ENCODE measurements at regions of chr13 and their contacts with region 1.

Region 1: GRCh38 chr13:43986421-43986981 is 106.8 kb downstream of the LACC1 start:
- DNase-seq: no peak
- H3K4me3 ChIP-seq: no peak overlapping the region
- H3K4me3 Mint-ChIP-seq: no peak overlapping the region
- H3K27ac Mint-ChIP-seq: no peak overlapping the region
- H3K4me1 ChIP-seq: no peaks in the 10 kb centered on the region
- H3K4me1 Mint-ChIP-seq: peaks cover 7% of the 10 kb centered on the region
- H3K27me3 ChIP-seq: no peaks in the 10 kb centered on the region
- H3K27me3 Mint-ChIP-seq: no peaks in the 10 kb centered on the region
- CTCF ChIP-seq: no peak

Region 2: DNA sequence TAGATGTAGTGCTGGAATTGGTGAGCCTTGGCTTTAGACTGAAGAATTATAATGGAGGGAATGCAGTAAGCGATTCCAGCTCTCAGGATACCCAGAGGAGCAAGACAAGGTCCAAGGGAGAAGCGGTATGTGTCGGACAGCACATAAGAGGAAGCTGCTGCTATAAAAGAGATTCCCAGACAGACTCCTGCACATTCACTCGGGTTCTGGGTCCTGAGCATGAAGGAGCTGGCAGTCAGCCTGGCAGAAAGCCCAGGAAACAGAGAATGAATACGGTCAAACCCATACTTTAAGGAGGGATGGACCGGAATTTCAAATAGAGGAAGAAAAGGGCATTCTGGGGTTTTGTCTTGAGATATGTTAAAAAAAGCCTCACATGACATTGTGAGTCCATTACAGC is 654.8 kb before region 1 on chr13:
- CTCF ChIA-PET with region 1: no interaction called
- POLR2A ChIA-PET with region 1: no interaction called
- intact Hi-C with region 1: no loop called
- DNase-seq: no peak
- H3K4me3 ChIP-seq: no peak overlapping the region
- H3K4me3 Mint-ChIP-seq: no peak overlapping the region
- H3K27ac Mint-ChIP-seq: no peak overlapping the region
- H3K4me1 ChIP-seq: no peaks in the 10 kb centered on the region
- H3K4me1 Mint-ChIP-seq: no peaks in the 10 kb centered on the region
- H3K27me3 ChIP-seq: no peaks in the 10 kb centered on the region
- H3K27me3 Mint-ChIP-seq: no peaks in the 10 kb centered on the region
- CTCF ChIP-seq: no peak

Region 3: DNA sequence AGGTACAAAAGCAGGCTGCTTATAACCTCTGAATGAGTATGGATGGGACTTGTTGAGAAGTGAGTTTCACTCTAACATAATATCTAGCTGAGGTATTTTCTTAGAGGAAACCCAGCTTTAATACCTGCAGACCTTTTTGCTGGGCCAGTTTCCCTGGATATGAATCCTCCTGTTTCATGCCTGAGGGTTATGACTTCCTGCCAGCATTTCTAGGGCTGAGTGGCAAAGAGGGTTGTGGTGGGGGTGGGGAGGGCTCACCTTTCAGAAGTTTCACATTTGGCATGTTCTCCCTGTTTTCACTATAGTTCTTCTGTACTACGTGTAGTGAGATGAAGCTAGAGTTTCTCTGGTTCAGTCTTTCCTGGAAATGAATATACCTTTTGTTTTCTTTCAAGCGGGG is 33.1 kb before region 1 on chr13:
- CTCF ChIA-PET with region 1: no interaction called
- POLR2A ChIA-PET with region 1: no interaction called
- intact Hi-C with region 1: no loop called
- DNase-seq: no peak
- H3K4me3 ChIP-seq: no peak overlapping the region
- H3K4me3 Mint-ChIP-seq: no peak overlapping the region
- H3K27ac Mint-ChIP-seq: no peak overlapping the region
- H3K4me1 ChIP-seq: no peaks in the 10 kb centered on the region
- H3K4me1 Mint-ChIP-seq: no peaks in the 10 kb centered on the region
- H3K27me3 ChIP-seq: no peaks in the 10 kb centered on the region; the same call in 1 of the 2 replicates
- H3K27me3 Mint-ChIP-seq: peaks cover 15% of the 10 kb centered on the region
- CTCF ChIP-seq: no peak

Region 4: DNA sequence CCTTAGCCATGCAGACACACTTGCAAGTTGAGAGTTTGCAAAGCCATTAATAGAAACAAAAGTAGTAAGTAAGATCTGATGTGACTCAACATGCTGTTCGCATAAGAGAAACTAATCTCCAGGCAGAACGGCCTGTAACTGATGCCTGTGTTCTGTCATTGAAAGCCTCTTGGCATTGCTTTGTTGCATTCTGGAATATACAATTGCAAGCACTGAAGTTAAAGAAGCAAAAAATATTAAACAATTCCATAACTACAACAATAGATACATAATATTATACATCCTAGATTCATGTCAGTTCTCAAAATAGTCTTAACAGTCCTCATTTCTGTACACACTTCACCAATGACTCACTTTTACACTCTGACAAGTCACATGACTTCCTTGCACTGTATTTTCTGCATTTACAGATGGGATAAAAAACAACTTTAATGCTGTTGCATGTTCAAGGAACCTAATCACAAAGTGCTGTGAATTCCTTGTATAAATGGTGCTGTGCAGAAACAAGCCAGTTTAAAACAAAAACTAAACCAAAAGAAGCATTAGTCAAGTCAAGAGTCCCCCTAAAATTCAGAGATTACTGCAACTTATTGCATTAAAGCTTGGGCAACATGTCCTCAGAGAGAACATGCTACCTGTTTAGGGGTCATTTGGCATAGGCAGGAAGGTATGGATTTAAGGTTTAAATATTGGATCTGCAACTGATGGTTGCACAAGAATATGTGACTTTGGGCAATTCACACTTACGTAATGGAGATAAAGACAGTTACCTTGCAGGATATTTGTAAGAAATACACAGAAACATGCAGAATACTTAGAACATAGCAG is 307.6 kb after region 1 on chr13:
- CTCF ChIA-PET with region 1: no interaction called
- POLR2A ChIA-PET with region 1: no interaction called
- intact Hi-C with region 1: no loop called
- DNase-seq: no peak
- H3K4me3 ChIP-seq: no peak overlapping the region
- H3K4me3 Mint-ChIP-seq: no peak overlapping the region
- H3K27ac Mint-ChIP-seq: no peak overlapping the region
- H3K4me1 ChIP-seq: no peaks in the 10 kb centered on the region
- H3K4me1 Mint-ChIP-seq: no peaks in the 10 kb centered on the region
- H3K27me3 ChIP-seq: no peaks in the 10 kb centered on the region
- H3K27me3 Mint-ChIP-seq: no peaks in the 10 kb centered on the region
- CTCF ChIP-seq: no peak

Region 5: GRCh38 chr13:44470638-44471562 is 484.4 kb after region 1 on chr13:
- CTCF ChIA-PET with region 1: no interaction called
- POLR2A ChIA-PET with region 1: no interaction called
- intact Hi-C with region 1: loop called (anchors 5 kb)
- DNase-seq: peak in 1 of 2 experiments; percentile 39
- H3K4me3 ChIP-seq: no peak overlapping the region
- H3K4me3 Mint-ChIP-seq: no peak overlapping the region
- H3K27ac Mint-ChIP-seq: no peak overlapping the region
- H3K4me1 ChIP-seq: peaks cover 19% of the 10 kb centered on the region
- H3K4me1 Mint-ChIP-seq: peaks cover 15% of the 10 kb centered on the region
- H3K27me3 ChIP-seq: no peaks in the 10 kb centered on the region
- H3K27me3 Mint-ChIP-seq: no peaks in the 10 kb centered on the region
- CTCF ChIP-seq: peak; percentile 55 to 66

Measured in Caco-2 (cell line).